ENCODE measurements at regions of chr7 and their contacts with region 1.

Region 1: GRCh38 chr7:8465338-8465737 is 31.9 kb downstream of the NXPH1 start:
- DNase-seq: no peak
- H3K4me3 ChIP-seq: no peak overlapping the region
- H3K27ac ChIP-seq: no peak overlapping the region
- H3K4me1 ChIP-seq: no peaks in the 10 kb centered on the region
- H3K27me3 ChIP-seq: no peaks in the 10 kb centered on the region
- CTCF ChIP-seq: no peak
- EP300 ChIP-seq: no peak
- POLR2A ChIP-seq: no peak

Region 2: GRCh38 chr7:8190119-8190895 is 275.0 kb before region 1 on chr7:
- in situ Hi-C with region 1: no loop called
- intact Hi-C with region 1: no loop called
- DNase-seq: peak; percentile 59
- H3K4me3 ChIP-seq: no peak overlapping the region
- H3K27ac ChIP-seq: peak overlapping the region in 1 of 4 donors; percentile 10
- H3K4me1 ChIP-seq: peaks cover 9 to 17% (median 11%) of the 10 kb centered on the region in 4 donors
- H3K27me3 ChIP-seq: no peaks in the 10 kb centered on the region
- CTCF ChIP-seq: peak; percentile 38 to 51 (median 45)
- EP300 ChIP-seq: no peak
- POLR2A ChIP-seq: no peak

Region 3: GRCh38 chr7:8290645-8291314 is 174.6 kb before region 1 on chr7:
- in situ Hi-C with region 1: no loop called
- intact Hi-C with region 1: no loop called
- DNase-seq: no peak
- H3K4me3 ChIP-seq: no peak overlapping the region
- H3K27ac ChIP-seq: peak overlapping the region in 1 of 4 donors; percentile 11
- H3K4me1 ChIP-seq: peaks cover 0 to 12% (median 0%) of the 10 kb centered on the region in 4 donors
- H3K27me3 ChIP-seq: no peaks in the 10 kb centered on the region
- CTCF ChIP-seq: no peak
- EP300 ChIP-seq: no peak
- POLR2A ChIP-seq: no peak

Region 4: DNA sequence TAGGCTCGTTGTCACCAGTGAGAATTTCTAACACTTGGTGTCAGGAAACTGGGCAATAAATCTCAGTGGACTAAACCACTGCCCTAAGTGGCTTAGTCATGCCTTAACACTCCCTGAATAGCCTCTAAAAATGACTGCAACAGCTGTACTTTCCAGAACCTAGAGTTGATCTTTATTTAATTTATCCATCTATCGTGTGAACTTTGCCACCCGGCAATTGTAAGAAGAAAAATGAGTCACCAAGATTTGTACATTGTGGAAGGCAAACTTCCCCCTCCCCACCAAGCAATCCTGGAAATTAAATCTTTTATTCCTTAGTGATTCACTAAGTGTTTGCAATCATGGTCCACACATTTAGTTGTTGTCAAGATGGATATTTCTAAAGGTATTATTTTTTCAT is 15.2 kb after region 1 on chr7:
- in situ Hi-C with region 1: no loop called
- intact Hi-C with region 1: loop called (anchors 1 kb)
- DNase-seq: no peak
- H3K4me3 ChIP-seq: no peak overlapping the region
- H3K27ac ChIP-seq: no peak overlapping the region
- H3K4me1 ChIP-seq: no peaks in the 10 kb centered on the region
- H3K27me3 ChIP-seq: no peaks in the 10 kb centered on the region
- CTCF ChIP-seq: no peak
- EP300 ChIP-seq: no peak
- POLR2A ChIP-seq: no peak